ENCODE measurements at regions of chr19 and their contacts with region 1.

Region 1: DNA sequence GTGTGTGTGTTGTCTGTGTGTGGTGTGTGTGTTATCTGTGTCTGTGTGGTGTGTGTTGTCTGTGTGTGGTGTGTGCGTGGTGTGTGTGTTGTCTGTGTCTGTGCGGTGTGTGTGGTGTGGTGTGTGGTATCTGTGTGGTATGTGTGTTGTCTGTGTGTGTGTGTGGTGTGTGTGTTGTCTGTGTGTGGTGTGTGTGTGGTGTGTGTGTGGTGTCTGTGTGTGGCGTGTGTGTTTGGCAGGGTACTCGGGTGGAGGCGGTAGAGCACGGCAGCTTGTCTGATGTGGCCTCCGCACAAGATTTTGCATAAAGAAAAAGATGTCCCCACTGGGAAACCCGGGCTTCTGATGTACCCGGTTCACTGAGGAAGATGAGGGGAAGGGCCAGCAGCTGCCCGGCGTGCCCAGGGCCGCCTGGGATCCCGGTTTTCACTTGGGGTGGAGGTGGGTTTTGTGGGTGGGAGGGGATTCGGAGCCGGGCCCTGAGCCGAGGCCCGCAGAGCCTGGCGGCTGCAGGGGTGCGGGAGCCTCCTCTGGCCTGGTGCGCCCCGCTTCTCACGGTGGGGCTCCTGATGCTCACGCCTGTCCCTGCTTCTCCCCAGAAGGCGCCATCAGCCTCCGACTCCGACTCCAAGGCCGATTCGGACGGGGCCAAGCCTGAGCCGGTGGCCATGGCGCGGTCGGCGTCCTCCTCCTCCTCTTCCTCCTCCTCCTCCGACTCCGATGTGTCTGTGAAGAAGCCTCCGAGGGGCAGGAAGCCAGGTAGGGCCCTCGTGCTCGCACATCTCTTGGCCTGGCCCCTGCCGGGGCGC is 21.2 kb downstream of the HDGFL2 start:
- DNase-seq: no peak
- ATAC-seq: no peak
- H3K4me3 ChIP-seq: no peak overlapping the region
- H3K27ac ChIP-seq: no peak overlapping the region
- H3K4me1 ChIP-seq: no peaks in the 10 kb centered on the region
- H3K27me3 ChIP-seq: no peaks in the 10 kb centered on the region
- CTCF ChIP-seq: no peak

Region 2: GRCh38 chr19:4415352-4415751 is 78.0 kb before region 1 on chr19:
- intact Hi-C with region 1: no loop called
- DNase-seq: no peak
- ATAC-seq: peak in 1 of 8 donors; percentile 22
- H3K4me3 ChIP-seq: no peak overlapping the region
- H3K27ac ChIP-seq: no peak overlapping the region
- H3K4me1 ChIP-seq: peaks cover 0 to 13% (median 6%) of the 10 kb centered on the region in 9 donors
- H3K27me3 ChIP-seq: no peaks in the 10 kb centered on the region
- CTCF ChIP-seq: no peak

Region 3: GRCh38 chr19:4425537-4425936 is 67.8 kb before region 1 on chr19:
- intact Hi-C with region 1: no loop called
- DNase-seq: no peak
- ATAC-seq: no peak
- H3K4me3 ChIP-seq: no peak overlapping the region
- H3K27ac ChIP-seq: no peak overlapping the region
- H3K4me1 ChIP-seq: peaks cover 0 to 6% (median 0%) of the 10 kb centered on the region in 9 donors
- H3K27me3 ChIP-seq: no peaks in the 10 kb centered on the region
- CTCF ChIP-seq: no peak

Region 4: DNA sequence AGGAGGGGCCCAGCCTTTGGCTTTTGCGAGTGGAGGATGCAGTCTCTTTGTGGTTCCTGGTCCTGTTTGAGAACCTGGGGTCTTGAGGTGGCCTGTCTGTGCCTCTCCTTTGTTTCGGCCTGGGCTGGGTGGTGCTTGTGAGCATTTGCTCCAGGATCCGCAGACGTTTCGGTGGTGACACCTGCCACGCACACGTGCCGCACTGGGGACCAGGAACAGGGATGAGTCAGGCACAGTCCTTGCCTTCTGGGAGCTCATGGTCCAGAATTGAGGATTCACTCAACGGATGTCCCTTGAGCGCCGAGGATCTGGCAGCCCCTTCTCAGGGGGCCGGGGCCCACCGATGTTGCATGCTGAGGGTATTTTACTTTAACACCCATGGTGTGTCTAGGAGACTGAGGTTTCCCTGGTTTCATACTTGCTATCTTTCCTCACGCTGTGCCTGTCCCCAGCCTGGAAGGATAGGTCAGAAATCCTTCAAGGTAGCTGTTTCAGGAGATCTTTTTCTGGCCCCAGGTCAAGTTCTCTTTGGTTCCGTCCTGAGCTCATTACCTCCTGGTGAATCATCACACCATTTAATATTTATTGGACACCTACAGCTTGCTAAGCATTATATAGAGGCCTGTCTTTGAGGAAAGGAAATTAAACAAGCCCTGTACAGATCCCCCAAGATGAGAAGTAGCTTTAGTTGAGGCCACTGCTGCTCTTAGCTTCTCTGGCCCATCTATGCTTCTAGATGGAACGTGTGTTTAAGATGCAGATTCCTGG is 16.1 kb before region 1 on chr19:
- intact Hi-C with region 1: loop called in 1 of 10 experiments (anchors 2 kb)
- DNase-seq: no peak
- ATAC-seq: no peak
- H3K4me3 ChIP-seq: no peak overlapping the region
- H3K27ac ChIP-seq: no peak overlapping the region
- H3K4me1 ChIP-seq: peaks cover 8 to 24% (median 19%) of the 10 kb centered on the region in 9 donors
- H3K27me3 ChIP-seq: no peaks in the 10 kb centered on the region
- CTCF ChIP-seq: no peak

Region 5: GRCh38 chr19:4547303-4548237 is 54.3 kb after region 1 on chr19:
- intact Hi-C with region 1: no loop called
- DNase-seq: no peak
- ATAC-seq: peak in 3 of 8 donors; percentile 22 to 31 (median 31)
- H3K4me3 ChIP-seq: no peak overlapping the region
- H3K27ac ChIP-seq: no peak overlapping the region
- H3K4me1 ChIP-seq: peaks cover 0 to 9% (median 0%) of the 10 kb centered on the region in 9 donors
- H3K27me3 ChIP-seq: no peaks in the 10 kb centered on the region
- CTCF ChIP-seq: peak in 5 of 9 donors; percentile 13 to 37 (median 20)

Region 6: DNA sequence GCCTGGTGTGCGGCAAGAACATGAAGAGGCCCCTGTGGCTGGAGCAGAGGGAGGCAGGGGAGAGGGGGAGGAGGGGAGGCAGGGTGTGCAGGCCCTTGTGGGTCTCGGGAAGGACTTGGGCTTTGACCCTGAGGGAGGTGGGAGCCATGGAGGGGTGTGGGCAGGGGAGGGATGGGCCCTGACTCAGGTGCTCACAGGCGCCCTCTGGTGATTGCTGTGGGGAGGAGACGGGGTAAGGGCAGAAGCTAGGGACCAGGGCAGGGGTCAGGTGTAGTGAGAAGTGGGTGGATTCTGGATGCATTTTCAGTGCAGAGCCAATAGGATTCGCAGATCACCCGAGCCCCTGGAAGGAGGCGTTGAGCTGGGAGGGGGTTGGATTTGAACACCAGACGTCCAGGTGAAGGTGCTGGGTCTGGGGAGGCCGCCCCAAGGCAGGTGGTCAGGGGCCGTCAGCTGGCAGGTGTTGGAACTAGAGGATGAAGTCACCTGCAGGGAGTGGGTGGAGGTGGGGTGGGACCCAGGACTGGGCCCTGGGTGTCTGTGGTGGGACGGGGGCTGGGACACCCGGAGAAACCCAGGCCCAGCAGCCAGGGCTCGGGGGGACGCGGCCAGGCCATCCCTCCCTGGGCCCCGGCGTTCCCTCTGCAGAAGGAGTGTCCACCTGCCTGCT is 661.0 kb after region 1 on chr19:
- intact Hi-C with region 1: no loop called
- DNase-seq: peak in 1 of 2 donors; percentile 34
- ATAC-seq: peak in 6 of 8 donors; percentile 17 to 61 (median 34)
- H3K4me3 ChIP-seq: no peak overlapping the region
- H3K27ac ChIP-seq: no peak overlapping the region
- H3K4me1 ChIP-seq: peaks cover 0 to 10% (median 0%) of the 10 kb centered on the region in 9 donors
- H3K27me3 ChIP-seq: no peaks in the 10 kb centered on the region
- CTCF ChIP-seq: peak in 7 of 9 donors; percentile 36 to 55 (median 44)

Measured in heart right ventricle (tissue), 16 donors.